H1 (cell line): ENCODE measurements at regions of chr1 and their contacts with region 1.

Region 1: GRCh38 chr1:1033009-1033587 is 13.2 kb downstream of the AGRN start:
- DNase-seq: peak; percentile 81 to 97
- H3K4me3 ChIP-seq: peak overlapping the region; percentile 32 to 67 (median 36); a peak in 5 of 8 replicates
- H3K27ac ChIP-seq: no peak overlapping the region
- H3K4me1 ChIP-seq: peaks cover 0 to 23% (median 11%) of the 10 kb centered on the region in 4 experiments; a peak in 6 of 7 replicates
- H3K27me3 ChIP-seq: peaks cover 0 to 18% (median 14%) of the 10 kb centered on the region in 4 experiments; a peak in 5 of 7 replicates
- CTCF ChIP-seq: peak in 2 of 3 experiments; percentile 75 to 76; a peak in 3 of 4 replicates
- EP300 ChIP-seq: peak in 1 of 2 experiments; percentile 47; a peak in 1 of 3 replicates
- POLR2A ChIP-seq: peak in 1 of 2 experiments; percentile 45; a peak in 1 of 3 replicates
- RAD21 ChIP-seq: peak; percentile 75 to 79

Region 2: DNA sequence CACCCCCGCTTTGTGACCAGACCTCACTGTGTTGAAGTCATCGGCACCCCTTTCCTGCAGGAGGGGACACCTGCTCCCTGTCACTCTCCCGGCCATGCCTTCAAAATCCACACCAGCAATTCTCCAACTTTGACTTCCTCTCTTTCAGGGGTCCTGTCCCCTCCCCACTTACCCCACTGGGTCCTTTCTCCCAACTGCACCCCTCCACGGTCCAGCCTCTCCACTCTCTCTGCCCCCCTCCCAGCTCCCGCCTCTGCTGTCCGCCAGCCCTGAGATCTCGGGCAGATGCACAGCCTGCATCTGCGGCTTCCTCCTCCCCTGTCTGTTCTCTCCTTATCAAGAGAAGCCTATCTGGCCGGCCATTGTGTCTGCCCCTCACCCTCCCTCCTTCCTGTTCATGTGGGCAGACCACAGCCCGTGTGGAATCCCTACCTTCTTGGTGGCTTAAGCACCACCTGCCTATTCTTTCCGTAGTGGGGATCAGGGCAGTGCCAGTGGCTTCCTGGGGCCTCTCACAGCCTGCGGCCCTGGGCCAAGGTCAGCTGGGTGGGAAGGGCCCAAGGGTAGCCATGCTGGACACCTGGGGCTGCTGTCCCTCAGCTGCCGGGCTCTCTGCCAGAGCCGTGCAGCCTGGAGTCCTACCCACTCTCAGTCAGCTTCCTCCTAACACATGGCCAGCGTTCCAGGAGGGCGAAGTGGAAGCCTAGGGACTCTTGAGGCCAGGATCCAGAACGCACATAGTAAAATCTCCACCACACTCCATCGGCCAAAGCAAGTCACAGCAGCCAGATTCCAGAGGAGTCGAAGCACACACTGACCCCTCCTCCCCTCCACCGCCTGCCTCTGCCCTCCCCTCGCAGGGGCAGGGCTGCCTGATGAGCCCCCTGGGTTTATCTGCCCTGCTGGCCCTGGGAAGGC is 28.1 kb before region 1 on chr1:
- CTCF ChIA-PET with region 1: interaction called, 8 read pairs
- POLR2A ChIA-PET with region 1: interaction called, 10 read pairs
- DNase-seq: no peak
- H3K4me3 ChIP-seq: no peak overlapping the region
- H3K27ac ChIP-seq: no peak overlapping the region
- H3K4me1 ChIP-seq: peaks cover 0 to 28% (median 10%) of the 10 kb centered on the region in 4 experiments; a peak in 3 of 7 replicates
- H3K27me3 ChIP-seq: peaks cover 15 to 52% (median 32%) of the 10 kb centered on the region in 4 experiments
- CTCF ChIP-seq: no peak
- EP300 ChIP-seq: no peak
- POLR2A ChIP-seq: no peak
- RAD21 ChIP-seq: no peak

Region 3: DNA sequence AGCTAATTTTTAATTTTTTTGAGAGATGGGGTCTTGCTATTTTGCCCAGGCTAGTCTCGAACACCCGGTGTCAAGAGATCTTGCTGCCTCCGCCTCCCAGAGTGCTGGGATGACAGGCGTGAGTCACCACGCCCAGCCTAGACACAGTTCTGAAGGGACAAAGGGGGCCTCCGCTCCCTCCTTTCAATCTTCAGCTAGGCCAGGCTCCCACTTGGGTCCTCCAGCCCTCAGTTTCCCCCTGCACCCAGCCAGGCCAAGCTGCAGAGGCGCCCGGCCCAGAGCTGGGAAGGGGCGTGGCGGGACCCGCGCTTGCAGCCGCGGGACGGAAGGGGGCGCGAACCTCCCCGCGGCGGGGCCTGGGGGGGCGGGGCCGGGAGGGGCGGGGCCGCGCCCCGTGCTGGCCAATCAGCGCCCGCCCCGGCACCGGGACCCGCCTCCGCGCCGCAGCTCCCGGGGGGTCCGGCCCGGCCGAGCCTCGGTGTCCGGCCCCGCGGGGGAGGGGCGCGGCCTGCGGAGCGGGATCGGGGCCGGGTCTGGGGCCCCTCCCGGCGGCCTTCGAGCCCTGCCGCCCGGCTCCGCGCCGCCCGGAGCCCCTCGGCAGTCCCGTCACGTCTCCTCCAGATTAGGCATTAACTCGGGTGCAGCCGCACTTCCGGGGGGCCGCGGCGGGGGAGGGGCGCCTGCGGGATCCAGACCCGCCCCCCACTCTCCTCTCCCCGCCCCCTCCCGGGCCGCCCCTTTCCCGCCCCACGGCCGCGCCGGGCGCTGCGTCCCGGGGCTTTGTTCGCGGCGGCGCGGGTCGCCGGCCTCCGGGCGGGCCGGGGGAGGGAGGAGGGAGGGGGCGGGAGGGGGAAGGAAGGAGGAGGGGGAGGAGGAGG is 13.7 kb before region 1 on chr1:
- CTCF ChIA-PET with region 1: interaction called, 60 read pairs
- POLR2A ChIA-PET with region 1: interaction called, 245 read pairs
- DNase-seq: peak in 1 of 2 experiments; percentile 84
- H3K4me3 ChIP-seq: peak overlapping the region in 2 of 4 experiments; percentile 45 to 83; a peak in 2 of 8 replicates
- H3K27ac ChIP-seq: no peak overlapping the region; the same call in 1 of the 2 replicates
- H3K4me1 ChIP-seq: peaks cover 2 to 36% (median 27%) of the 10 kb centered on the region in 4 experiments
- H3K27me3 ChIP-seq: no peaks in the 10 kb centered on the region
- CTCF ChIP-seq: peak in 2 of 3 experiments; percentile 38 to 42; a peak in 2 of 4 replicates
- EP300 ChIP-seq: no peak
- POLR2A ChIP-seq: no peak; a peak in 1 of 3 replicates
- RAD21 ChIP-seq: no peak

Region 4: DNA sequence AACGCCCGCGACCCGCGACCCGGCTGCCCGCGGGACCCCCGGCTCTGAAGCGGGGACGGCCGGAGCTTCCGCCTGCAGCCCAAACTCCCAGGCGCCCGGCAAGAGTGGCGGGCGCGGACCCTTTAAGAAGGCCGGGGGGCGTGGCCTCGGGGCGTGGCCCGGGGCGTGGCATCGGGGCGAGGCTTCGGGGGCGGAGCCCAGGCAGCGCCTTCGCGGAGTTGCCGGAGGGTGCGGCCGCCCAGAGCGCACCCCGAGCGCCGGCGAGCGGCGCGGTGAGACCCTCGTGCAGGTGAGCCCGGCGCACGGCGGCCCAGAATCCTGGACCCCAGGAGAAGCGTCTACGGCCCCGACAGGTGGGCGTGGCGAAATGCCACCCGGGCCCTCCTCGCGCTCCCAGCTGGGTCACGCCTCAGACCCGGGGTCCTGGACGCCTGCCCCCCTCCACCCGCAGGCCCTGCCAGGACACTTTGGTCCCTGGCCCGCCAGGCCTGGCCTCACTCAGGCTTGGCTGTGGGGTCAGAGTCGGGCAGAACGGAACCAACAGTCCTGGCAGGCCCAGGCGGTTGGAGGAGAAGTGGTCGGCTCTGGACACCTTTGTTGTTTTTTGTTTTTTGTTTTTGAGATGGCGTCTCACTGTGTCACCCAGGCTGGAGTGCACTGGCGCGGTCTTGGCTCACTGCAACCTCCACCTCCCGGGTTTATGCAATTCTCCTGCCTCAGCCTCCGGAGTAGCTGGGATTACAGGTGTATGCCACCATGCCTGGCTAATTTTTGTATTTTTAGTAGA is 26.6 kb after region 1 on chr1:
- CTCF ChIA-PET with region 1: interaction called, 70 read pairs
- POLR2A ChIA-PET with region 1: interaction called, 70 read pairs
- DNase-seq: peak in 1 of 2 experiments; percentile 98
- H3K4me3 ChIP-seq: peak overlapping the region; percentile 43 to 76 (median 48)
- H3K27ac ChIP-seq: no peak overlapping the region
- H3K4me1 ChIP-seq: peaks cover 0 to 18% (median 11%) of the 10 kb centered on the region in 4 experiments; a peak in 5 of 7 replicates
- H3K27me3 ChIP-seq: peaks cover 9 to 49% (median 34%) of the 10 kb centered on the region in 4 experiments
- CTCF ChIP-seq: no peak
- EP300 ChIP-seq: no peak
- POLR2A ChIP-seq: no peak
- RAD21 ChIP-seq: no peak

Region 5: DNA sequence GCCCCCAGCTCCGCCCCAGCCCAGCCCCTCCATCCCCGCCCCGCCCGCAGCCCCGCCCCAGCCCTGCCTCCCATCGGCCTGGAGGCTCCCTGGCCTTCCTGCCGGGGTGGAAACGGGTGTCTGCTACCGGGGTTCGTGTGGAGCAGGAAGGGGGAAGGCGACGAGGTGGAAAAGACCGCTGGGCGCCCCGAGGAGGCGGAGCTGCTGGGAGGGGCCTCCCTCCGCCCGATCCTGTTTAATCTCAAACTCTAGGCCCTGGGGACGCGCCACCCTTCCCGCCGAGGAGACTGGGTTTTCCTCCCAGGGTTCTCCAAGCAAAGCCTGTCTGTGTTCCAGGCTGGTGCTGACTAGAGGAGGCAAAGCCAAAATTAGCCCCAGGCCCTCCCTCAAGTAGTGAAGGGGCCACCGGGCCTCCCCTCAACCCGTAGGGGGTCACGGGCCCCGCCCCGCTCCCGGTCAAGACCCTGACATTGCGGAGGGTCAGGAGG is 124.4 kb after region 1 on chr1:
- CTCF ChIA-PET with region 1: no interaction called
- POLR2A ChIA-PET with region 1: no interaction called
- DNase-seq: peak; percentile 54 to 83
- H3K4me3 ChIP-seq: peak overlapping the region; percentile 22 to 68 (median 54)
- H3K27ac ChIP-seq: peak overlapping the region; percentile 56; the same call in 1 of the 2 replicates
- H3K4me1 ChIP-seq: peaks cover 0 to 22% (median 16%) of the 10 kb centered on the region in 4 experiments; a peak in 6 of 7 replicates
- H3K27me3 ChIP-seq: no peaks in the 10 kb centered on the region; a peak in 1 of 7 replicates
- CTCF ChIP-seq: no peak
- EP300 ChIP-seq: no peak
- POLR2A ChIP-seq: peak in 1 of 2 experiments; percentile 34; a peak in 1 of 3 replicates
- RAD21 ChIP-seq: no peak